Activated naive CD8-positive, alpha-beta T cell treated with anti-CD3 and anti-CD28 coated beads, Interleukin-2, amount 10 ng/mL, durations not matched to agents 7 days and 5 days (primary cell): ENCODE measurements at regions of chr1 and their contacts with region 1.

Region 1: DNA sequence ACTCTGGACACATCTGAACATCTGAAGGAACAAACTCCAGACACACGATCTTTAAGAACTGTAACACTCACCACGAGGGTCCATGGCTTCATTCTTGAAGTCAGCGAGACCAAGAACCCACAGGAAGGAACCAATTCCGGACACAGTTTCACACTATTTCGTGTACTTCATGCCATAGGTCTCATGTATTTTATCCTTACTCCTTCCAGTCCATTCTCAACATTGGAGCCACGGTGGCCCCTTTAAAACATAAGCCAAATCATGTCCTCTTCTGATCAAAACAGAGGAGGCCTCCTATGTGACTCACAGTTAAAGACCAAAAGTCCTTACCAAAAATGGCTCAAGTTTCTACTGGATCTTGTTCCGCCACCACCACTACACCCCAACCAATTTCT is 29.8 kb upstream of the RCOR3 start:
- DNase-seq: peak; percentile 41
- ATAC-seq: peak; percentile 80
- H3K4me3 Mint-ChIP-seq: peak overlapping the region; percentile 45
- H3K27ac Mint-ChIP-seq: peak overlapping the region; percentile 69
- H3K4me1 Mint-ChIP-seq: peaks cover 23% of the 10 kb centered on the region
- H3K27me3 Mint-ChIP-seq: no peaks in the 10 kb centered on the region

Region 2: DNA sequence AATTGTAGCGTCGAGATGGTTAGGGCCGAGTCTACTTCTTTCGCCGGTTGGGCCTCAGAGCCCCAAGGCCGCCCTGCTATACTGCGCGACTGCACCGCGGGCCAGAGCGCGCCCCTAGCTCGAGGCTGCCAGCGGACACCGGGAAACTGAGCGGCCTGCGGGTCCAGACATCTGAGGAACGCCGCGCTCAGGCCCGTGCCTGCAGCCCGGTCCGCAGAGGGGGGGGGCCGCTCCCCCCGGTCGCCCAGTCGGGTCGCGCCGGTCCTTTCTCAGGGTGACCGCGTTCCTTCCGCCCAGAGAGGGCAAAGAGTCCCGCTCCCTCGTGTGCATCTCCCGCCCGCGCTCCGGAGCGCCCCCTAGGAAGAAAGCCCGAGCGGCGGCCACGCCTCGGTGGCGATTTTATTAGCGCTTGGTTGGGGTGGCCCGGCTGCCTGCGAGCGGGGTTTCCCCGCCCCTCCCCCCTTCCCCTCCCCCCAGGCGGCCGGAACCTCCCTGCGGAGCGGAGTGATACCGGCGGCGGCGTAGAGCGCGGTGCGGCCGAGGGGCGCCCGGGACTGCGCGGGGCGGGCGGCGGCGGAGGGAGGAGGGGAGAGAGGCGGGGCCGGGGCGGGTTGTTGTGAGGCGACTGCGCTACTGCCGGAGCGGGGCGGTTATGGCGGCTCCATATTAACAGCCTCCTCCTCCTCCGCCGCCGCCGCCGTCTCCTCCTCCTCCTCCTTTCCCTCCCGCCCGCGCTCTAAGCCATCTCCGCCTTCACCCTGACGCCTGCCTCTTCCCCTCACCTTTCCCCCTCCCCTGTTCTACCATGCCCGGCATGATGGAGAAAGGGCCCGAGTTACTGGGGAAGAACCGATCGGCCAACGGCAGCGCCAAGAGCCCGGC is 29.6 kb after region 1 on chr1 and contains the start of gene RCOR3:
- POLR2A ChIA-PET with region 1: interaction called, 13 read pairs
- DNase-seq: peak; percentile 93
- ATAC-seq: peak; percentile 80
- H3K4me3 Mint-ChIP-seq: peak within 1 kb of the TSS; percentile 96
- H3K27ac Mint-ChIP-seq: peak within 1 kb of the TSS; percentile 97
- H3K4me1 Mint-ChIP-seq: peaks cover 18% of the 10 kb centered on the region
- H3K27me3 Mint-ChIP-seq: no peaks in the 10 kb centered on the region
- total RNA-seq, gene RCOR3: 54.8 to 61.1 TPM

Region 3: GRCh38 chr1:211309617-211310016 is 80.3 kb after region 1 on chr1:
- POLR2A ChIA-PET with region 1: no interaction called
- DNase-seq: no peak
- ATAC-seq: no peak
- H3K4me3 Mint-ChIP-seq: no peak overlapping the region
- H3K27ac Mint-ChIP-seq: no peak overlapping the region
- H3K4me1 Mint-ChIP-seq: peaks cover 8% of the 10 kb centered on the region
- H3K27me3 Mint-ChIP-seq: no peaks in the 10 kb centered on the region